Activated CD4-positive, alpha-beta T cell treated with anti-CD3 and anti-CD28 coated beads for 36 hours (primary cell): ENCODE measurements at regions of chr19 and their contacts with region 1.

Region 1: GRCh38 chr19:58182989-58183816 is at the start of gene ZNF274:
- DNase-seq: peak; percentile 98
- ATAC-seq: peak; percentile 91
- H3K4me3 Mint-ChIP-seq: peak within 1 kb of the TSS; percentile 88
- H3K27ac Mint-ChIP-seq: peak within 1 kb of the TSS; percentile 99
- H3K4me1 Mint-ChIP-seq: peaks cover 16% of the 10 kb centered on the region
- H3K27me3 Mint-ChIP-seq: no peaks in the 10 kb centered on the region
- total RNA-seq, gene ZNF274: 20.2 to 20.5 TPM

Region 2: GRCh38 chr19:57279418-57280066 is 903.7 kb before region 1 on chr19:
- CTCF ChIA-PET with region 1: no interaction called
- POLR2A ChIA-PET with region 1: no interaction called
- intact Hi-C with region 1: loop called in 1 of 2 experiments (anchors 2 kb)
- DNase-seq: peak; percentile 92
- ATAC-seq: peak; percentile 74
- H3K4me3 Mint-ChIP-seq: no peak overlapping the region
- H3K27ac Mint-ChIP-seq: no peak overlapping the region
- H3K4me1 Mint-ChIP-seq: peaks cover 31% of the 10 kb centered on the region
- H3K27me3 Mint-ChIP-seq: no peaks in the 10 kb centered on the region

Region 3: GRCh38 chr19:57850553-57851017 is 332.6 kb before region 1 on chr19:
- CTCF ChIA-PET with region 1: no interaction called
- POLR2A ChIA-PET with region 1: no interaction called
- intact Hi-C with region 1: loop called in 1 of 2 experiments (anchors 1 kb)
- DNase-seq: peak; percentile 33
- ATAC-seq: no peak
- H3K4me3 Mint-ChIP-seq: peak overlapping the region; percentile 95
- H3K27ac Mint-ChIP-seq: peak overlapping the region; percentile 97
- H3K4me1 Mint-ChIP-seq: peaks cover 23% of the 10 kb centered on the region
- H3K27me3 Mint-ChIP-seq: no peaks in the 10 kb centered on the region

Region 4: GRCh38 chr19:58228585-58229254 is 45.5 kb after region 1 on chr19 and contains the start of gene ZNF544:
- CTCF ChIA-PET with region 1: interaction called, 4 read pairs
- POLR2A ChIA-PET with region 1: no interaction called
- intact Hi-C with region 1: loop called (anchors 1 to 2 kb)
- DNase-seq: peak; percentile 85
- ATAC-seq: peak; percentile 87
- H3K4me3 Mint-ChIP-seq: peak within 1 kb of the TSS; percentile 91
- H3K27ac Mint-ChIP-seq: peak within 1 kb of the TSS; percentile 95
- H3K4me1 Mint-ChIP-seq: peaks cover 24% of the 10 kb centered on the region
- H3K27me3 Mint-ChIP-seq: no peaks in the 10 kb centered on the region
- total RNA-seq, gene ZNF544: 32.2 to 38.5 TPM

Region 5: GRCh38 chr19:58386576-58387337 is 203.6 kb after region 1 on chr19 and contains the start of gene RPS5:
- CTCF ChIA-PET with region 1: interaction called, 3 read pairs
- POLR2A ChIA-PET with region 1: no interaction called
- intact Hi-C with region 1: loop called in 1 of 2 experiments (anchors 1 kb)
- DNase-seq: peak; percentile 97
- ATAC-seq: peak; percentile 96
- H3K4me3 Mint-ChIP-seq: peak within 1 kb of the TSS; percentile 96
- H3K27ac Mint-ChIP-seq: peak within 1 kb of the TSS; percentile 97
- H3K4me1 Mint-ChIP-seq: peaks cover 33% of the 10 kb centered on the region
- H3K27me3 Mint-ChIP-seq: no peaks in the 10 kb centered on the region
- total RNA-seq, gene RPS5: 1,234 to 1,535 TPM

Region 6: GRCh38 chr19:58513694-58514563 is 330.7 kb after region 1 on chr19:
- CTCF ChIA-PET with region 1: no interaction called
- POLR2A ChIA-PET with region 1: no interaction called
- intact Hi-C with region 1: loop called in 1 of 2 experiments (anchors 1 kb)
- DNase-seq: peak; percentile 99
- ATAC-seq: peak; percentile 88
- H3K4me3 Mint-ChIP-seq: peak overlapping the region; percentile 88
- H3K27ac Mint-ChIP-seq: peak overlapping the region; percentile 81
- H3K4me1 Mint-ChIP-seq: peaks cover 27% of the 10 kb centered on the region
- H3K27me3 Mint-ChIP-seq: no peaks in the 10 kb centered on the region